Activated CD8-positive, alpha-beta T cell treated with anti-CD3 and anti-CD28 coated beads for 36 hours (primary cell): ENCODE measurements at regions of chr11 and their contacts with region 1.

Region 1: GRCh38 chr11:66677599-66678375 is at the start of gene RBM4B:
- DNase-seq: peak; percentile 98
- ATAC-seq: peak; percentile 93
- H3K4me3 Mint-ChIP-seq: peak within 1 kb of the TSS; percentile 88
- H3K27ac Mint-ChIP-seq: peak within 1 kb of the TSS; percentile 97
- H3K4me1 Mint-ChIP-seq: peaks cover 31% of the 10 kb centered on the region
- H3K27me3 Mint-ChIP-seq: no peaks in the 10 kb centered on the region
- CTCF ChIP-seq: no peak
- total RNA-seq, gene RBM4B: 10.7 to 13.1 TPM

Region 2: GRCh38 chr11:66438504-66439466 is 239.0 kb before region 1 on chr11 and contains the start of gene MRPL11:
- CTCF ChIA-PET with region 1: interaction called, 12 read pairs
- POLR2A ChIA-PET with region 1: interaction called, 3 read pairs
- intact Hi-C with region 1: no loop called
- DNase-seq: peak; percentile 97
- ATAC-seq: peak; percentile 99
- H3K4me3 Mint-ChIP-seq: peak within 1 kb of the TSS; percentile 96
- H3K27ac Mint-ChIP-seq: peak within 1 kb of the TSS; percentile 98
- H3K4me1 Mint-ChIP-seq: peaks cover 20% of the 10 kb centered on the region
- H3K27me3 Mint-ChIP-seq: peaks cover 1% of the 10 kb centered on the region
- CTCF ChIP-seq: peak; percentile 58
- total RNA-seq, gene MRPL11: 135 to 142 TPM

Region 3: DNA sequence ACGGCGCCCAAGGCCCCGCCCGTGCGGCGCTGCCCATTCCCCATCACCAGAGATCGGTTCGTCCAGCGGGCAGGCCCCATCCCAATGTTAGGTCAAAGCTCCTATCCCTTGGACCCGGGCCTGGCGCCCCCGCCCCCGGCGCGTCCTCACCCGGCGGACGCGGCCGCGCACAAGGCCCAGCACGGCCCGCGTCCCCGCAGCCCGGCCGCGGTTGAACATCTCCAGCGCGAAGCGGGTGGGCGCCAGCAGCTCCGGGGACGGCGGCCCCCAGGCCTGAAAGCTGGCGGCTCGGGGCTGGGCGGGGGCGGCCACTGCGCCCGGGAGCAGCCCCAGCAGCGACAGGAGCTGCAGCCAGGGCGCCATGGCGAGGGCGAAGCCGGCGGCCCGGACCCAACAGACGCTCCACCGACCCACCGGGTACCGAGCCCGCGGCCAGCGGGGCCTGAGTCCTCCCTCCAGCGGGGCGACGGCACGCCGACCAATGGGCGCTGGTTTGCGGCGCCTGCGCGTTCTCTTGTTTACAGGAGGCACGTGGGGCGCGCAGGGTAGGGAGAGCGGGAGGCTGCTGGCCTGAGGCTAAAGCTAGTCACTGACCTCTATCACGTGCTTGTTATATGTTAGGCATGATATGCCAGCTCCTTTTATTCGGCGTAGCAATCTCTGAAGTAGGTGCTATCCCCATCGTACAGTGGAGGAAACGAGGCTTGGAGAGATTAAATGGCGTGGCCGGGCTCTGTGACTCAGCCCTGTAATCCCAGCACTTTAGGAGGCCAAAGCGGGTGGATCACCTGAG is 109.5 kb before region 1 on chr11 and contains the start of gene CTSF:
- CTCF ChIA-PET with region 1: interaction called, 22 read pairs
- POLR2A ChIA-PET with region 1: no interaction called
- intact Hi-C with region 1: no loop called
- DNase-seq: peak; percentile 73
- ATAC-seq: peak; percentile 92
- H3K4me3 Mint-ChIP-seq: peak within 1 kb of the TSS; percentile 70
- H3K27ac Mint-ChIP-seq: no peak within 1 kb of the TSS
- H3K4me1 Mint-ChIP-seq: peaks cover 2% of the 10 kb centered on the region
- H3K27me3 Mint-ChIP-seq: no peaks in the 10 kb centered on the region
- CTCF ChIP-seq: no peak
- total RNA-seq, gene CTSF: 0.68 to 1.3 TPM

Region 4: GRCh38 chr11:66616379-66617154 is 61.2 kb before region 1 on chr11 and contains the start of gene RBM14:
- CTCF ChIA-PET with region 1: interaction called, 13 read pairs
- POLR2A ChIA-PET with region 1: interaction called, 21 read pairs
- intact Hi-C with region 1: no loop called
- DNase-seq: peak; percentile 99
- ATAC-seq: peak; percentile 96
- H3K4me3 Mint-ChIP-seq: peak within 1 kb of the TSS; percentile 93
- H3K27ac Mint-ChIP-seq: peak within 1 kb of the TSS; percentile 98
- H3K4me1 Mint-ChIP-seq: peaks cover 33% of the 10 kb centered on the region
- H3K27me3 Mint-ChIP-seq: no peaks in the 10 kb centered on the region
- CTCF ChIP-seq: no peak
- total RNA-seq, gene RBM14: 153 to 159 TPM

Region 5: DNA sequence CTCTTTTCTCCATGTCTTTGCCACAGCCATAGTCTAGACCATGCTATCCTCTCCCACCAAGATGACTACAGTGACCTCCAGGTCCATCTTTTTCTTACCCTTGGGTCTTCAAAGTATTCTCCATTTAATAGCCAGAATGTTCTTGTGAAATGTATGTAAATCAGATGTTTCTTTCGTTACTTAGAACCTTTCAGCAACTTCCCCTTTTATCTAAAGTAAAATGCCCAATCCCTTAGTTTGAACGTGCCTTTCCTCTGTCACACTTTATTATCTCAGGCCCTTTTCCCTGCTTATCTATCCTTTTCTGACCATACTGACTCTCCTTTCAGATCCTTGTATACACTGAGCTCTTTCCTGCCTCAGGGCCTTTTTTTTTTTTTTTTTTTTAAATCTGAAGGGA is 18.0 kb before region 1 on chr11:
- CTCF ChIA-PET with region 1: interaction called, 9 read pairs
- POLR2A ChIA-PET with region 1: interaction called, 10 read pairs
- intact Hi-C with region 1: no loop called
- DNase-seq: no peak
- ATAC-seq: no peak
- H3K4me3 Mint-ChIP-seq: no peak overlapping the region
- H3K27ac Mint-ChIP-seq: peak overlapping the region; percentile 46
- H3K4me1 Mint-ChIP-seq: peaks cover 9% of the 10 kb centered on the region
- H3K27me3 Mint-ChIP-seq: no peaks in the 10 kb centered on the region
- CTCF ChIP-seq: no peak

Region 6: DNA sequence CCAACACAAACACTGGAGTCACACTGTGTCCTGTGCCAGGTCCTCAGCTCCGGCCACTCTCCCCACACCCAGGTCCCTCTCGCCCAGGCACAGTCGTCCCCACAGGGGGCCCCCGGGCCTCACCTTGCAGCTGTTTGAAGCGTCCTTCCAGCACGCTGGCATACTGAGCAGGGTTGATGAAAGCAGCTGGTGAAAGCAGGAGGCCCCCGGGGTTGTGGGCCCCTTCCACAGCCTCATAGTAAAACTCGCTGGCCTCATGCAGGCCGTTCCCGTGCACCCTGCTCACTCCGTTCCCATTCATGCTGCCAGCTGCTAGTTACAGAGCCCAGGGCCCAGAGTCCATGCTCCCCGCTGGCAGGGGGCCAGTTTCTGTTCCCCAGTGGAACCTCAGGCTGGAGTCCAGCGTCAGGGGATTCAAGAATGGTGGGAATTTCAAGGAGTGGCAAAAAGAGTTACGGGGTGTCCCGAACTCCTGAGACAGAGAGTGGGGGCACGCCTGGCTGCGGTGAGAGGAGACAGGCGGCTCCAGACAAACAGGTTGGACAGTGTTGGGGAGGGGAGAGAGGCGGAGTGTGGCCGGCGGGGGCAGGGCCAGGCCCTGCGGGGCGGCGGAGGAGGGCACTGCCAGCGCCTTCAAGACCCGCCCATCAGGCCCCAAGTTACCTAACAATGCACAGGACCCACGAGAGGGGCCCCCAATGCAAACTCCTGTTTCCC is 40.7 kb after region 1 on chr11:
- CTCF ChIA-PET with region 1: no interaction called
- POLR2A ChIA-PET with region 1: no interaction called
- intact Hi-C with region 1: no loop called
- DNase-seq: no peak
- ATAC-seq: no peak
- H3K4me3 Mint-ChIP-seq: no peak overlapping the region
- H3K27ac Mint-ChIP-seq: no peak overlapping the region
- H3K4me1 Mint-ChIP-seq: peaks cover 8% of the 10 kb centered on the region
- H3K27me3 Mint-ChIP-seq: peaks cover 26% of the 10 kb centered on the region
- CTCF ChIP-seq: no peak

Region 7: DNA sequence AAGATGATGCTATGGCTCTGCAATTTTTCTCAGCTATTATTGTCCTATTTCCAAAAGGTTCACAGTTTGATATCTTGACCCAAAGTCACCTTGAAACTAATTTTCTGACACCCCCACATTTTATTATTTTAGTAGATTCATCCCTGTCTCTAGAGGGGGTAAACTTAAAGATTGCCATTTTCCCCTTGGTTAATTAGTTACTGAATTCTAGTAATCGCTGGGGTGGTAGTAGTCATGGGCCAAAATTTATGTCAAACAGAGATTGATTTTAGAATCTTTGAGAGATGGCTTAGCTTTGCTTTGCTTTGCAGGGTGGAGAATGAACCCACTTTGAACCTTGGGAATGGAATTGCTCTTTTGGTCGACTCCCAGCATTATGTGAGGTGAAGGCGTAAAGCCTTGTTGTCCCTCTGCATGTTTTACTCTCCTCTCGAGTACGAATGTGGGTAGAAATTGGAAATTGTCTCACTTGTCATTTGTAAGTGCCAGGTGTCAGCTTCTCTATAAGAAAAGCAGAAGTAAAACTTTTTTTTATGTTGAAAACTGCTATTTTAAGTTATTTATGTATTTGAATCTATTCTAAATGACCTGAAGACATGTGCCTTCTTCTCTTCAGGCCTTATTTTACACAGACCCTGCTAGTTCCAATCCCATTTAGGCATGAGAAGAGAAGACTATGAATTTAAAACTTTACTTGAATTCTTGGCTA is 123.1 kb after region 1 on chr11:
- CTCF ChIA-PET with region 1: no interaction called
- POLR2A ChIA-PET with region 1: no interaction called
- intact Hi-C with region 1: no loop called
- DNase-seq: no peak
- ATAC-seq: no peak
- H3K4me3 Mint-ChIP-seq: no peak overlapping the region
- H3K27ac Mint-ChIP-seq: no peak overlapping the region
- H3K4me1 Mint-ChIP-seq: no peaks in the 10 kb centered on the region
- H3K27me3 Mint-ChIP-seq: no peaks in the 10 kb centered on the region
- CTCF ChIP-seq: no peak